ENCODE measurements at regions of chr7 and their contacts with region 1.

Region 1: GRCh38 chr7:91405093-91405492 is 140.9 kb downstream of the FZD1 start:
- DNase-seq: no peak
- ATAC-seq: no peak
- H3K4me3 ChIP-seq: no peak overlapping the region
- H3K27ac ChIP-seq: no peak overlapping the region
- H3K4me1 ChIP-seq: no peaks in the 10 kb centered on the region
- H3K27me3 ChIP-seq: no peaks in the 10 kb centered on the region
- CTCF ChIP-seq: no peak
- EP300 ChIP-seq: no peak
- POLR2A ChIP-seq: no peak
- RAD21 ChIP-seq: no peak

Region 2: DNA sequence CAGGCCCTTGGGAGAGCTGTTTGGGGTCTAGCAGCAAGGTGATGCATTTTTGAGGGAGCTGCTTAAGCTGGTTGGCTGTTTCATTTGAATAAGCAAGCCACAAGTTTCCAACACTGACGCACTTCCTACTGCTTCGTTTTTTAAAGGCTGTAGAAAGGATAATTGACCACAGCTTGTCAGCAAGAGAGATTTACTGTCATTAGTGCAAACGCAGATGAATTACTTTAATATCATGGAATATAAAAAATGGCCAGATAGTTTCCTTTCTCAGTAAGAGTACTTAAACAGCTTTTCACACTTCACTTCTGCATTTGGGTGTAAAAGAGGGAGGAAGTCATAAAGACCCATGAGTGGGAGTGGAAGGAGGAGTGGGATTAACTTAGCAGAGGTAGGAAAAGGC is 79.4 kb before region 1 on chr7:
- CTCF ChIA-PET with region 1: no interaction called
- POLR2A ChIA-PET with region 1: no interaction called
- in situ Hi-C with region 1: no loop called
- intact Hi-C with region 1: no loop called
- DNase-seq: no peak
- ATAC-seq: no peak
- H3K4me3 ChIP-seq: no peak overlapping the region
- H3K27ac ChIP-seq: no peak overlapping the region
- H3K4me1 ChIP-seq: no peaks in the 10 kb centered on the region
- H3K27me3 ChIP-seq: no peaks in the 10 kb centered on the region
- CTCF ChIP-seq: no peak
- EP300 ChIP-seq: no peak
- POLR2A ChIP-seq: no peak
- RAD21 ChIP-seq: no peak

Region 3: DNA sequence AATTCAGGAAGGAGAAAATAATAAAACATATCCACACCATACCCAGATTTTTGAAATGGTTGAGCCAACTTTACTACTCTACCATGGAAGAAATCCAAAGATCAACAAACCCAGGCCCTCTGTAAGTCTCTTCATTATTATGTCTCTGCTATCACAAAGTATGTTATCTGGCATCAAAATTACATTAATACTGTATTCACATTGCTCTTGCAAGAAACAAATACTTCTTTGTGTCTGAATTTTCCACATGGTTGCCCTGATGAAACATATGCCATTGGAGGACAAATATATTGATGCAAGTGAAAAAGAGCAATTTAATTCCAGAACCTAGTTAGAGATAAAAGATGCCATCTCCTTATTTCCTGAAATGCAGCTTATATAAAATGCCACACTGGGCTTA is 63.2 kb after region 1 on chr7:
- CTCF ChIA-PET with region 1: no interaction called
- POLR2A ChIA-PET with region 1: no interaction called
- in situ Hi-C with region 1: no loop called
- intact Hi-C with region 1: loop called (anchors 2 kb)
- DNase-seq: no peak
- ATAC-seq: no peak
- H3K4me3 ChIP-seq: no peak overlapping the region
- H3K27ac ChIP-seq: no peak overlapping the region
- H3K4me1 ChIP-seq: no peaks in the 10 kb centered on the region
- H3K27me3 ChIP-seq: no peaks in the 10 kb centered on the region
- CTCF ChIP-seq: no peak
- EP300 ChIP-seq: no peak
- POLR2A ChIP-seq: no peak
- RAD21 ChIP-seq: no peak